B cell (primary cell): ENCODE measurements at regions of chr6 and their contacts with region 1.

Region 1: GRCh38 chr6:142885182-142885867 is 59.7 kb downstream of the HIVEP2 start:
- DNase-seq: peak; percentile 90
- ATAC-seq: peak; percentile 81
- H3K4me3 ChIP-seq: peak overlapping the region in 4 of 5 experiments; percentile 28 to 50 (median 44)
- H3K4me3 Mint-ChIP-seq: peak overlapping the region; percentile 99
- H3K27ac ChIP-seq: peak overlapping the region; percentile 80 to 88
- H3K27ac Mint-ChIP-seq: peak overlapping the region; percentile 99
- H3K4me1 ChIP-seq: peaks cover 29 to 38% of the 10 kb centered on the region in 2 donors
- H3K4me1 Mint-ChIP-seq: peaks cover 76% of the 10 kb centered on the region
- H3K27me3 ChIP-seq: no peaks in the 10 kb centered on the region
- H3K27me3 Mint-ChIP-seq: no peaks in the 10 kb centered on the region
- CTCF ChIP-seq: no peak

Region 2: GRCh38 chr6:142746524-142746923 is 138.8 kb before region 1 on chr6:
- CTCF ChIA-PET with region 1: interaction called, 8 read pairs
- POLR2A ChIA-PET with region 1: interaction called, 3 read pairs
- intact Hi-C with region 1: loop called (anchors 1 kb)
- DNase-seq: peak; percentile 70
- ATAC-seq: peak; percentile 56
- H3K4me3 ChIP-seq: no peak overlapping the region
- H3K4me3 Mint-ChIP-seq: no peak overlapping the region
- H3K27ac ChIP-seq: no peak overlapping the region
- H3K27ac Mint-ChIP-seq: no peak overlapping the region
- H3K4me1 ChIP-seq: peaks cover 0 to 5% of the 10 kb centered on the region in 2 donors
- H3K4me1 Mint-ChIP-seq: peaks cover 17% of the 10 kb centered on the region
- H3K27me3 ChIP-seq: no peaks in the 10 kb centered on the region
- H3K27me3 Mint-ChIP-seq: no peaks in the 10 kb centered on the region
- CTCF ChIP-seq: peak; percentile 69

Region 3: DNA sequence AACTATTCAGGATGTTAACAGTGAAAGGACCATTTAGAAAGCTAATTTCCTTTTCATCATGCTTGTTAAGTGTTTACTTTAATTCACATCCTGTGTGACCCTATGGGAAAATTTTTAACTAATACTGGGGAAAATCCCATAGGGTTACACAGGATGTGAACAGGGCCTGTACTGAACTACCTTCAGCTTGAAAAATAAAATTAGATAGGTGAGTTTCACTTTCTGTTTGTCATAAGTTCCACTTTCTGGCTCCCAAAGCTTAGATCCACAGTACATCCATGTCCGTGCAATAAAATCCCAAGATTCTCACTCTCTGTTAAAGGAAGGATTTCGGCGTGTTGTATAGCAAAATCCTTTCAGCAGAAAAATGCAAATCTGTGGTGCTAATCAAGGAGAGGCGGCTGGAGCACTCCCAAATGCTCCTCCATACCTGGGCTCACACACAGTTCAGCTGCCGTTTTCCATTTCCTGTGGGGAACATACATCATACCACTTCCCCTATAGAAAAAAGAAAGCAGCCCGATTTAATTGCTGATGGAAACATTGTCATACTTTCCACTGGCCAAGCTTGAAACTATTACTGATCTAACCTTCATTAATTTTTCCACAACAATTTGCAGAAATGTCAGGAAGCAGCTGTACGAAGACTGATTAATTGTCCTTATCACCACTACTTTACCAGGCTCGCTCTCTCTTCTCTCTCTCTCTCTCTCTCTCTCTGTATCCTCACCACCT is 65.6 kb before region 1 on chr6:
- CTCF ChIA-PET with region 1: interaction called, 4 read pairs
- POLR2A ChIA-PET with region 1: no interaction called
- intact Hi-C with region 1: loop called (anchors 1 kb)
- DNase-seq: peak; percentile 77
- ATAC-seq: peak; percentile 68
- H3K4me3 ChIP-seq: peak overlapping the region; percentile 18 to 89 (median 52)
- H3K4me3 Mint-ChIP-seq: peak overlapping the region; percentile 92
- H3K27ac ChIP-seq: peak overlapping the region; percentile 86 to 87
- H3K27ac Mint-ChIP-seq: peak overlapping the region; percentile 96
- H3K4me1 ChIP-seq: peaks cover 42 to 47% of the 10 kb centered on the region in 2 donors
- H3K4me1 Mint-ChIP-seq: peaks cover 70% of the 10 kb centered on the region
- H3K27me3 ChIP-seq: no peaks in the 10 kb centered on the region
- H3K27me3 Mint-ChIP-seq: no peaks in the 10 kb centered on the region
- CTCF ChIP-seq: no peak

Region 4: GRCh38 chr6:142857233-142857761 is 28.0 kb before region 1 on chr6:
- CTCF ChIA-PET with region 1: interaction called, 3 read pairs
- POLR2A ChIA-PET with region 1: no interaction called
- intact Hi-C with region 1: loop called (anchors 2 kb)
- DNase-seq: peak; percentile 61
- ATAC-seq: peak; percentile 67
- H3K4me3 ChIP-seq: peak overlapping the region; percentile 24 to 73 (median 52)
- H3K4me3 Mint-ChIP-seq: peak overlapping the region; percentile 83
- H3K27ac ChIP-seq: peak overlapping the region; percentile 83 to 84
- H3K27ac Mint-ChIP-seq: peak overlapping the region; percentile 94
- H3K4me1 ChIP-seq: peaks cover 69 to 77% of the 10 kb centered on the region in 2 donors
- H3K4me1 Mint-ChIP-seq: peaks cover 81% of the 10 kb centered on the region
- H3K27me3 ChIP-seq: no peaks in the 10 kb centered on the region
- H3K27me3 Mint-ChIP-seq: no peaks in the 10 kb centered on the region
- CTCF ChIP-seq: no peak

Region 5: DNA sequence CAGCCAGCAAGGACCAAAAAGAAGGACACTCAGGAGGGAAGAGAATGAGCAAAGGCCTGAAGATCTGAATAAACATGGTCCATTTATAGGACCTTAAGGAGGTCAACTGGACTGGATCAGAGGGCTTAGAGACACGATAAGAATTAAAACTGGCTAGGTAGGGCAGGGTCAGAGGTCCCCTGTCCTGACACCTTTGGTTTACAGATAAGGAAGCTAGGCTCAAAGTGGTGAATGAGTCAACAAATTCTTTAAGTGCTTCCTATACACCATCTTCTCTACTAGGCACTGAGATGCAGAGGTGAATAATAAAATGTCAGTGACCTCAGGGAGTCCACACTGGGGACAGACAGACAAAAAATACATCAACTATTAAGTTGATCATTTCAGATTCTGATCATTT is 10.6 kb before region 1 on chr6:
- CTCF ChIA-PET with region 1: interaction called, 4 read pairs
- POLR2A ChIA-PET with region 1: interaction called, 4 read pairs
- intact Hi-C with region 1: loop called (anchors 1 kb)
- DNase-seq: no peak
- ATAC-seq: no peak
- H3K4me3 ChIP-seq: no peak overlapping the region
- H3K4me3 Mint-ChIP-seq: no peak overlapping the region
- H3K27ac ChIP-seq: peak overlapping the region in 1 of 2 donors; percentile 56
- H3K27ac Mint-ChIP-seq: peak overlapping the region; percentile 69
- H3K4me1 ChIP-seq: peaks cover 27 to 34% of the 10 kb centered on the region in 2 donors
- H3K4me1 Mint-ChIP-seq: peaks cover 67% of the 10 kb centered on the region
- H3K27me3 ChIP-seq: no peaks in the 10 kb centered on the region
- H3K27me3 Mint-ChIP-seq: no peaks in the 10 kb centered on the region
- CTCF ChIP-seq: no peak

Region 6: GRCh38 chr6:142926494-142927270 is 41.4 kb after region 1 on chr6:
- CTCF ChIA-PET with region 1: interaction called, 3 read pairs
- POLR2A ChIA-PET with region 1: interaction called, 4 read pairs
- intact Hi-C with region 1: loop called (anchors 1 kb)
- DNase-seq: peak; percentile 88
- ATAC-seq: peak; percentile 92
- H3K4me3 ChIP-seq: peak overlapping the region; percentile 46 to 94 (median 75)
- H3K4me3 Mint-ChIP-seq: peak overlapping the region; percentile 98
- H3K27ac ChIP-seq: peak overlapping the region; percentile 98
- H3K27ac Mint-ChIP-seq: peak overlapping the region; percentile 96
- H3K4me1 ChIP-seq: peaks cover 16 to 37% of the 10 kb centered on the region in 2 donors
- H3K4me1 Mint-ChIP-seq: peaks cover 49% of the 10 kb centered on the region
- H3K27me3 ChIP-seq: no peaks in the 10 kb centered on the region
- H3K27me3 Mint-ChIP-seq: no peaks in the 10 kb centered on the region
- CTCF ChIP-seq: no peak

Region 7: DNA sequence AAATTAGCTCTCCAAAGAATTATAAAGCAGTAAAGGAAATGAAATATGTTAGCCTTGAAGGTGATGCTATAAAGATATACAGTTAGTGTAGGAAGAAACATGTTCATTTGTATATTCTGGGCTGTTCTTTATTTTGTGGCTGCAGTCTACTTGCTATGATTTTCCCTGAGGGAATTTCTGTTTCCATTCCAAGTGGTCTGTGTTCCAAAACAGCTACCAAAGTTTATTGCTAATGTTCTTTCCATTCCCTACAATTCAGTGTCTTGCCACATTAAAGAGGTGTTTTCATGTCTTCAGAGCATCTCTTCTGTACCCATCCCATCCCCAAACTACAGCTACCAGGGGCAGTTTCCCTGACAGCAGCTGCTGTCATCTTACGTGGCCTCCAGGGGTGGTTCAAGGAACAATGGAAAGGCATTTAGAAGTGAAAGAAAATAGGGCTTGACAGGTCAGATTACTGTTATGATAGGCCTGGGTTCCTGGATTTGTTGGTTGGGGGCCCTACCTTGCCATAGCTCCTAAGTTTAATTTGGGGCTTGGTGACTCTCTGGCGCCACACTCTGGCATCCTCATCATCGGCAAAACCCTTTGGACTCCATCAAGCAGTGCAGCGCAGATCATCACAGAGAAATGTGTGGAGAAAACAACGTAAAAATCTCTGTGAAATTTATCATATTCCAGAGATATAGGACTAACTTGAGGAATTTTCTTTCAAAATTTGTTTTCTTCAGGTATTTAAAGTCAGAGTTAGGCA is 141.5 kb after region 1 on chr6:
- CTCF ChIA-PET with region 1: interaction called, 12 read pairs
- POLR2A ChIA-PET with region 1: no interaction called
- intact Hi-C with region 1: no loop called
- DNase-seq: peak; percentile 69
- ATAC-seq: peak; percentile 39
- H3K4me3 ChIP-seq: no peak overlapping the region
- H3K4me3 Mint-ChIP-seq: no peak overlapping the region
- H3K27ac ChIP-seq: no peak overlapping the region
- H3K27ac Mint-ChIP-seq: no peak overlapping the region
- H3K4me1 ChIP-seq: no peaks in the 10 kb centered on the region
- H3K4me1 Mint-ChIP-seq: peaks cover 3% of the 10 kb centered on the region
- H3K27me3 ChIP-seq: no peaks in the 10 kb centered on the region
- H3K27me3 Mint-ChIP-seq: no peaks in the 10 kb centered on the region
- CTCF ChIP-seq: peak; percentile 74